ENCODE measurements at regions of chr20 and their contacts with region 1.

Region 1: GRCh38 chr20:21719592-21720214 is 14.2 kb downstream of the PAX1 start:
- DNase-seq: peak; percentile 2
- H3K4me3 ChIP-seq: no peak overlapping the region
- CTCF ChIP-seq: peak; percentile 51

Region 2: GRCh38 chr20:22312744-22313346 is 593.1 kb after region 1 on chr20:
- CTCF ChIA-PET with region 1: interaction called, 36 read pairs
- POLR2A ChIA-PET with region 1: no interaction called
- DNase-seq: no peak
- H3K4me3 ChIP-seq: no peak overlapping the region
- CTCF ChIP-seq: peak; percentile 47

Measured in AG04449 (cell line).